ENCODE measurements at regions of chr10 and their contacts with region 1.

Region 1: DNA sequence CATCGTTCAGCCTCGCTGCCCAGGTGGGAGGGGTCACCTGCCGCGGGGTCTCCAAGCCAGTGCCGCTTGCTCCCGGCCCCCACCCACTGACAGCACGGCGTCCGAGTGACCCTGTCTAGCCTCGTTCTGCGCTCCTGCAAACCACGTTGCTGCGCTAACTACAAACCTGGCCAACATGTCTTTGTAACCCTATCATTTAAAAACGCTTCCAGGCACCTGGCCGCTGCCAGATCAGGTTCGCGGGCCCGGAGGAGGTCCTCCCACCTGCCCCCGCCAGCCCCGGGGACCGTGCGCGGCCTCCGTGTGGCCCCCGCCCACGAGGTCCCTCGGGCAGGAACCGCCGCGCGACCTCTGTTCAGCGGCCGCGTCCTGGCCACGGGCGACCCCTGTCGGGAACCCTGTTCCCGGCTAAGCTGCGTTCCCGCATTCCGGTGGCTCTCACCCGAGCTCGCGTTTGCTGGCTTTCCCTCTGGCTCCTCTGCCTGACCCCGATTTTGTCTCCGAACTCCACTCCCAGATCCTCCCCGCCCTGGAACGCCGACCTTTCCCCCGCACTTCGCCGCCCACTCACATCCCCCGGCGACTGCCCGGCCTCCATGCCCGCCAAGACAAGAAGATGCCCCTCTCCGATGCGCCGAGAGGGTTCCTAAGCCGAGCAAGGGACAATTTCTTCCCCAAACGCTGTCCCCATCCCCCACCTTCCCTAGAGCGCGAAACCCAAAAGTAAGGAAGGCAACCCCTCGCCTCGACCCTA is 2.4 kb downstream of the SFMBT2 start:
- DNase-seq: peak; percentile 88

Region 2: GRCh38 chr10:7239312-7239985 is 169.0 kb before region 1 on chr10:
- intact Hi-C with region 1: no loop called
- DNase-seq: no peak

Region 3: GRCh38 chr10:7260412-7260900 is 148.0 kb before region 1 on chr10:
- intact Hi-C with region 1: loop called in 1 of 2 experiments (anchors 10 kb)
- DNase-seq: no peak

Region 4: DNA sequence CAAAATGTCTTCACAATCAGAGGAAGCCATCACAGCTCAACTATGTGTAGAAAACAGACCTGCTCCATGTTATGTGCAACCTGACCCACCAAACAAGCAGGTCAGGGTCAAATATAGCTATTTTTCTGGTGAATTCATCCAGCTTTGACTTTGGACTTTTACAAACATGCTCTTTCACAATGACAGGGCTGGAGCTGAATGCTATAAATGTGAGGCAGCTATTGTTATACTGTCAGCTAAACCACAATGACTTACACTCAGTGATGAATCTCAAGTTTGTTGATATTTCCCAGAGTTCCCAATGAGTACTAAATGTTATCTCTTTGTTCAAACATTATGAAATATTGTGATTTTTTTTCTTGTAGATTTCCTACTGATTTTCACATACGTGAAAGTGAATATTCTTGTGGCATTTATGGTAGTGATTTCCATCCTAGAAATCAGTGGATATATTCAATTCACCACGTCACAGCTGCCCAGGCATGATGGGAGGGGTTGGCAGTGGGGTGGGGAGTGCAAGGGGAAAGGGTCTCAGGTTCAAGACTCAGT is 292.2 kb after region 1 on chr10:
- intact Hi-C with region 1: no loop called
- DNase-seq: no peak

Measured in posterior vena cava (tissue), 2 donors.